ENCODE measurements at regions of chr6 and their contacts with region 1.

Region 1: DNA sequence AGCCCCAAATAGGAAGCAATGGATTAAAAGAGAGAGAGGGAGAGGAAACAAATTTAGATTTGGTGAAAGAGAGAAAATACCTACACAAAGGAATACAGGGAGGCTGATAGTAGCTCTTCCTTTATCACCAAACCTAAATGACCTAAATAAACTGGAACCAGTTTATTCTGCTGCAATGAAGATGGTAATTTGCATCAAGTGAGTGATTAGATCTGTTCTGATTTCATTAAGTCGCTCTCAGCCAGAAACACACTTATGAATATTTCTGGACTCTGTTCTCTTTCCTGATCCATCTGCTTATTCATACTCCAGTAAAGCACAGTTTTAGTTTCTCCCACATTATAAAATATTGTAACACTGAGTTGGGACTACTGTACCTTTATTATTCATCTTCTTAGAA is 83.4 kb upstream of the BMP5 start:
- DNase-seq: no peak
- ATAC-seq: no peak
- H3K4me3 ChIP-seq: peak overlapping the region in 2 of 12 donors; percentile 7 to 15
- H3K27ac ChIP-seq: peak overlapping the region in 4 of 12 donors; percentile 3 to 37 (median 29)
- H3K4me1 ChIP-seq: peaks cover 0 to 5% (median 0%) of the 10 kb centered on the region in 12 donors
- H3K27me3 ChIP-seq: no peaks in the 10 kb centered on the region
- CTCF ChIP-seq: no peak
- POLR2A ChIP-seq: no peak

Region 2: GRCh38 chr6:55980627-55981211 is 21.9 kb after region 1 on chr6:
- intact Hi-C with region 1: loop called in 1 of 10 experiments (anchors 1 kb)
- DNase-seq: peak in 1 of 5 donors; percentile 20
- ATAC-seq: no peak
- H3K4me3 ChIP-seq: no peak overlapping the region
- H3K27ac ChIP-seq: no peak overlapping the region
- H3K4me1 ChIP-seq: no peaks in the 10 kb centered on the region
- H3K27me3 ChIP-seq: no peaks in the 10 kb centered on the region
- CTCF ChIP-seq: peak; percentile 14 to 80 (median 72)
- POLR2A ChIP-seq: no peak

Measured in heart left ventricle (tissue), 16 donors.